GM12878 (cell line): ENCODE measurements at regions of chr21 and their contacts with region 1.

Region 1: GRCh38 chr21:45590246-45590725 is 48.0 kb upstream of the SLC19A1 start:
- DNase-seq: no peak
- ATAC-seq: peak; percentile 51
- H3K4me3 ChIP-seq: no peak overlapping the region
- H3K27ac ChIP-seq: no peak overlapping the region
- H3K4me1 ChIP-seq: peaks cover 20% of the 10 kb centered on the region
- H3K27me3 ChIP-seq: no peaks in the 10 kb centered on the region
- CTCF ChIP-seq: no peak
- EP300 ChIP-seq: no peak
- POLR2A ChIP-seq: no peak
- RAD21 ChIP-seq: no peak

Region 2: DNA sequence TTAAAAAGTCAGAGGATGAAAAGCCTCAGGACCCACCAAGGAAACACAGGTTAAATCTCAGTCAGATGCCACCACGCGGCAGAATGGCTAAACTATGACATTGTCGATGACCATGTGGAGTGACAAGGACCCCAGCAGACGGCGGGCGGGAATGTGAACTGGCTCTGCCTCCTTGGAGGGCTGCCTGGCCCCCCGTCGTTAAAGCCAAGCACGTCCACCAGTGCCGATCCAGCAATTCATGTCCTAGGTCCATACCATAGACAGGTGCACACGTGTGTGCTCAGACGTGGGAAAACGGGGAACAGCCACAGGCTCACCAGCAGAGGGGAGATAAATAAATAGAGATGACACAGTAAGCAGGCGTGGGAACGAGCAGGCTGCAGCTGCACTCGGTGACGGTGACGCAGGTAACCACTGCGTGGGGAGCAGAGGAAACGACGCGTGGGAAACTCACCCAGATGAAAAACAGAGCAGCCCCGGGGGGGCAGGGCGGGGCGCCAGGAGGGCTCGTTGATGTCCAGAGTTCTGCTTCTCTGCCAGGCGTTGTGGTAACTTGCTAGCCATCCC is 24.9 kb after region 1 on chr21:
- CTCF ChIA-PET with region 1: interaction called, 3 read pairs
- POLR2A ChIA-PET with region 1: interaction called, 10 read pairs
- RAD21 ChIA-PET with region 1: interaction called, 5 read pairs
- SMC1A ChIA-PET with region 1: interaction called, 7 read pairs
- in situ Hi-C with region 1: no loop called
- intact Hi-C with region 1: no loop called
- DNase-seq: peak; percentile 78
- ATAC-seq: peak; percentile 93
- H3K4me3 ChIP-seq: 0 out of 2 replicates have a peak overlapping the region, but pooled peaks have one; percentile 38
- H3K27ac ChIP-seq: peak overlapping the region; percentile 50; the same call in 1 of the 2 replicates
- H3K4me1 ChIP-seq: peaks cover 10% of the 10 kb centered on the region
- H3K27me3 ChIP-seq: no peaks in the 10 kb centered on the region
- CTCF ChIP-seq: peak in 1 of 3 experiments; percentile 5; a peak in 1 of 6 replicates
- EP300 ChIP-seq: peak; percentile 93 to 94; a peak in 3 of 4 replicates
- POLR2A ChIP-seq: no peak
- RAD21 ChIP-seq: no peak